GM12878 (cell line): ENCODE measurements at regions of chr6 and their contacts with region 1.

Region 1: DNA sequence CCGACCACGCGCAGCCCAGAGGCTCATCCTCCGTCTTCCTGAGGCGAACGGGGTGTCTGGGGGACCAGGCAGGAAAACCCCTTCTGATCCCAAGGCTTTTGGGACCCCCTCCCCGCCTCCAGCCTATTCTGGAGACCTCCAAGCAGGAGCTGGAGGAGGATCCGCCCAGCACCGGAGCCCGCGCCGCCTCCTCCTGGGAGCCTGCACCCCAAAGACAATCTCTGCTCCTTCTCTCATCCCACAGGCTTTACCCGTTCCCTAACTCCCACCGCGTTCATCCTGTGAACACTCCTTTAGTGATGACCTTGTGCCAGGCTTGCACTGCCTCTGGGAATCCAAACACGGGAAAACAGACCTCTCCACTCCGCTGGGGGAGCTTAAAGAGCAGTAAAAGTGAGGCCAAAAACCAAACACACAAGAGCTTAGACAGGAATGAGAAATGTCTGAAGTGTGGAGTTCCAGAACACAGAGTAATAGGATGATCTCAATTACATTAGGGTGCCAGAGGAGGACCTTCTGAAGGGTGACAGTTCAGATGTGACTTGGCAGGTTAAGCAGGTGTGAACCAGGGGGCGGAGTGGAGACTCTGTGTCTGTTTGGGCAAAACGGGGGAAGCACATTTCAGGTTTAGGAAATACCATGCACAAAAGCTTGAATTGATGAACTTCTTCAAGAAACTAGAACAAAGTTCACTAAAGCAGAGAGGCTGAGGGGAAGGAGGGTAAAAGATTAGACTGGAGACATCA is 7.6 kb downstream of the HLA-DRB5 start:
- DNase-seq: no peak
- ATAC-seq: no peak
- H3K4me3 ChIP-seq: no peak overlapping the region
- H3K27ac ChIP-seq: no peak overlapping the region
- H3K4me1 ChIP-seq: no peaks in the 10 kb centered on the region
- H3K27me3 ChIP-seq: no peaks in the 10 kb centered on the region
- CTCF ChIP-seq: no peak
- EP300 ChIP-seq: no peak
- POLR2A ChIP-seq: no peak
- RAD21 ChIP-seq: no peak

Region 2: GRCh38 chr6:32432050-32432450 is 90.4 kb before region 1 on chr6:
- CTCF ChIA-PET with region 1: no interaction called
- POLR2A ChIA-PET with region 1: no interaction called
- RAD21 ChIA-PET with region 1: no interaction called
- SMC1A ChIA-PET with region 1: no interaction called
- in situ Hi-C with region 1: no loop called
- intact Hi-C with region 1: no loop called
- DNase-seq: no peak
- ATAC-seq: peak; percentile 55
- H3K4me3 ChIP-seq: no peak overlapping the region
- H3K27ac ChIP-seq: no peak overlapping the region
- H3K4me1 ChIP-seq: peaks cover 10% of the 10 kb centered on the region
- H3K27me3 ChIP-seq: no peaks in the 10 kb centered on the region
- CTCF ChIP-seq: peak in 2 of 3 experiments; percentile 41 to 62; a peak in 4 of 6 replicates
- EP300 ChIP-seq: no peak
- POLR2A ChIP-seq: no peak
- RAD21 ChIP-seq: peak; percentile 76

Region 3: DNA sequence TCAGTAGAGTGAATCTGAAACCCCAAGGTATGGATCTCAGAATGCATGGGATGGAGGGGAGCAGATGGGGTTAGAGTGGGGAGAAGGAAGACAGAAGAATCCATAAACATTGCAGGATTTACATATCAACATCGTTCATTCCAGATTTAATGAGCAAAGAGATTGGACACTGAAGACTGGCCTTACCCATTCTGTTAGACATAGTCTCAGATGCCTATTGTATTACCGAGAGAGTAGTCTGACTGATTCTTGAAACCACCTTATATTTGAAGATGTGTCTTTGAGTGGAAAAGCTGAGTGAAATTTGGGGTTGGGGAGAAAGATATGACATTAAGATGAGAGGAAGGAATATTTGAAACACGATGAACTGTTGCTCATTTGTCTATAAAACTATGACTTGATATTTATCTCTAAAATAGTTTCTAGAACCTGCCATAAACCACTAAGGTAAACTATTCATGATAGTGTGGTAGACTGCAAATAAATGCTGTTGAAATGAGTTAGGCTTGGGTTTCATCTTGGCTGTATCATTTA is 77.1 kb before region 1 on chr6:
- CTCF ChIA-PET with region 1: no interaction called
- POLR2A ChIA-PET with region 1: no interaction called
- RAD21 ChIA-PET with region 1: no interaction called
- SMC1A ChIA-PET with region 1: no interaction called
- in situ Hi-C with region 1: no loop called
- intact Hi-C with region 1: no loop called
- DNase-seq: no peak
- ATAC-seq: peak; percentile 44
- H3K4me3 ChIP-seq: no peak overlapping the region
- H3K27ac ChIP-seq: no peak overlapping the region
- H3K4me1 ChIP-seq: peaks cover 4% of the 10 kb centered on the region; the same call in 1 of the 2 replicates
- H3K27me3 ChIP-seq: no peaks in the 10 kb centered on the region
- CTCF ChIP-seq: no peak
- EP300 ChIP-seq: no peak
- POLR2A ChIP-seq: no peak; the same call in 1 of the 2 replicates
- RAD21 ChIP-seq: no peak

Region 4: GRCh38 chr6:32558426-32559057 is 36.1 kb after region 1 on chr6:
- CTCF ChIA-PET with region 1: interaction called, 7 read pairs
- POLR2A ChIA-PET with region 1: interaction called, 5 read pairs
- RAD21 ChIA-PET with region 1: interaction called, 5 read pairs
- SMC1A ChIA-PET with region 1: interaction called, 3 read pairs
- in situ Hi-C with region 1: no loop called
- intact Hi-C with region 1: loop called (anchors 2 kb)
- DNase-seq: no peak
- ATAC-seq: peak; percentile 84
- H3K4me3 ChIP-seq: no peak overlapping the region
- H3K27ac ChIP-seq: no peak overlapping the region
- H3K4me1 ChIP-seq: no peaks in the 10 kb centered on the region; the same call in 1 of the 2 replicates
- H3K27me3 ChIP-seq: no peaks in the 10 kb centered on the region
- CTCF ChIP-seq: no peak; a peak in 1 of 6 replicates
- EP300 ChIP-seq: no peak
- POLR2A ChIP-seq: no peak
- RAD21 ChIP-seq: no peak